MCF 10A (cell line): ENCODE measurements at regions of chr17 and their contacts with region 1.

Region 1: GRCh38 chr17:49496183-49496866 is 1.2 kb downstream of the NGFR start:
- DNase-seq: peak; percentile 53
- H3K4me3 Mint-ChIP-seq: peak overlapping the region; percentile 58
- H3K27ac Mint-ChIP-seq: no peak overlapping the region
- H3K4me1 Mint-ChIP-seq: peaks cover 14% of the 10 kb centered on the region
- H3K27me3 Mint-ChIP-seq: peaks cover 66% of the 10 kb centered on the region
- CTCF ChIP-seq: peak; percentile 86

Region 2: DNA sequence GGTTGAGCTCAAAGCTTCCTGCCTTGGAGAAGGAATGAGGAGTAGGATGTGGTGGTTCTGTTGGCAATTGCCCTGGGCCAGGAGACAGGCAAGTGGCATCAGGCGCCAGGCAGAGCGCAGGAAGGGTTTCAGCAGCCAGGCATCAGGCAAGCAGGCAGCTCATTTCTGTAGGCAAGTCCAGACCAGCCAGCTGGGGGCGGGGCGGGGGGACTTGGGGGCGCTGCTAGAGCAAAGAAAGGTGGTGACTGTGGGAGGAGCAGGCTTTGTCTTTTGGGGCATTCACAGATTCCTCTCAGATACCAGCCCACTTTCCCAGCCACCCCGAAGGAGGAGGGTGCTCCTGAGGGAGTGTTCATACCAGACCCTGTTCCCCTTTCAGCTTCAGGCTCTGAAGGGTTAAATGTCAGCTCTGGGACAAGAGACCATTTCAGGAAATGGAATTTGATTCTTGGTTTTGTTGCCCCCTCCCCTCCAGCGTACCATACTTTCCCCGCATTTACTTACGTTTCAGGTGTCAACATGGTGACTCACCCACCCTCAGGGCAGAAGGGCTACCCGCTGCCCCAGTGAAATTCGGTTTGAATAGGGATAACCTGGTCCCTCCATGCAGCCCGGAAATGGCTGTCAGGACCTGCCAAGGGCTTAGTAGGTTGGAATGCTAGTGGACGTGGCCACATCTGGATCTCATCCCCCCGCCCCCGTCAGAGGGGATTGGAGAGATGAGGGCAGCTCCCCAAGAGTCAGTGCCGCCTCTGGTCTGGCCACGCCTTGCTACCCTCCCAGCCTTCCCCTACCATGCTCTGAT is 11.9 kb after region 1 on chr17:
- CTCF ChIA-PET with region 1: interaction called, 12 read pairs
- POLR2A ChIA-PET with region 1: interaction called, 6 read pairs
- intact Hi-C with region 1: no loop called
- DNase-seq: peak; percentile 98
- H3K4me3 Mint-ChIP-seq: peak overlapping the region; percentile 45
- H3K27ac Mint-ChIP-seq: no peak overlapping the region
- H3K4me1 Mint-ChIP-seq: peaks cover 13% of the 10 kb centered on the region
- H3K27me3 Mint-ChIP-seq: peaks cover 22% of the 10 kb centered on the region
- CTCF ChIP-seq: no peak

Region 3: GRCh38 chr17:49548506-49549310 is 52.4 kb after region 1 on chr17:
- CTCF ChIA-PET with region 1: interaction called, 12 read pairs
- POLR2A ChIA-PET with region 1: no interaction called
- intact Hi-C with region 1: loop called (anchors 1 kb)
- DNase-seq: peak; percentile 60
- H3K4me3 Mint-ChIP-seq: no peak overlapping the region
- H3K27ac Mint-ChIP-seq: no peak overlapping the region
- H3K4me1 Mint-ChIP-seq: peaks cover 29% of the 10 kb centered on the region
- H3K27me3 Mint-ChIP-seq: no peaks in the 10 kb centered on the region
- CTCF ChIP-seq: peak; percentile 88